ENCODE measurements at regions of chr2 and their contacts with region 1.

Region 1: DNA sequence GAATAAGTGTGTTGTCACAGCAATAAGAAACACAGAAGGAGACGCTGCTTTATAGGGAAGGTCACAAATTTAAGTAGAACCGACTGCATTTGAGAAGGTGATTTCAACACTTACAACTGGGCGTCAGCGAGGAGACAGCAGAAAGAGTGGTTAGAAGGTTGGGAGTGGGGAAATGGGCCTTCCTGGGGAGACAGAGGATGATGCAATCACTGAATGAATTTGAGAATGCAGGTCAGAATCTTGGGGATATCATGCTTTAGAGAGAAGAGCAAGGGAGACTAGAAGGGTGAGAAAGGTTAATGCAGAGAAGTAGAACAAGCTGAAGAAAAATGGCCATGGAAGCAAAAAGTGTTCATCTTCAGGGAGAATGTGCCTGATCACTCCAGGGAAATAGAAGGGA is 616.1 kb upstream of the FAM98A start:
- DNase-seq: no peak

Region 2: DNA sequence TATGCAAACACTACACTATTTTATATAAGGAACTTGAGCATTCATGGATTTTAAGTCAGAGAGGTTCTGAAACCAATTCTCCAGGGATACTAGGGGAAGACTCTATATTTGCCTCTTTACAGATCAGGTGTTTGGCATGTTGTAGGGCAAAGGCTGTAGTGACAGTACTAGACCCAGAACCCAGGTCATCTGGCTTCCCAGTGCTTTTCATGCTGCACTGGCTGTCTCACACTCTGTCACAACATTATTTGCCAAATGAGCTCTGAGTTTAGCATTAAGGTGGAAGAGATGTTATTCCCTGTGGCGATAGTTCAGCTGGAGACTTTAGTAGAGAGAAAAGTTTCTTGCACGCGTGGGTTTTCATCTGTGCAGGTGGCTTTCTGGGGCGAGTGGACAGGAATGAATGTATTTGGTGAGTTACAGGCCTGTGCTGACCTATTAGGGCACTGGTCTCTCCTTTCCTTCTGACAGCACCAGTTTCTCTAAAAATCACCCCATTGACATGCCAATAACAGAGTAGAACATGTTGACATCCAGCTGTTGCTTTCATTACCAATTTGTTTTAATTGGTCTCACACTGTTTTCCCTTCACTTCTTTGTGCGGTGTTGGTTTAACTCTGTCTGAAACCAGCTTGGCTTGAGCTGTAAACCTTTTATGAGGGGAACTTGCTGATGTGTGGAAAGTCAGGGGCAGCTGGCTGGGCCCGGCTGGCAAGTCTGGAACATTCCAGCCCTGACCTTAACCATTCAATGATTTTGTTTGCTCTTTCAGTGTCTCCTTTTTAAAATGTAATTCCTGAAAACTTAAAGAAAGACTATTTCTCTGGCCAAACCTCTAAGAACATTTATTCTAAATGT is 27.0 kb after region 1 on chr2:
- intact Hi-C with region 1: loop called in 1 of 2 experiments (anchors 1 kb)
- DNase-seq: no peak

Measured in posterior vena cava (tissue), 2 donors.